ENCODE measurements at regions of chr3 and their contacts with region 1.

Region 1: GRCh38 chr3:50652709-50653108 is 22.0 kb upstream of the DOCK3 start:
- DNase-seq: peak; percentile 84
- H3K4me3 Mint-ChIP-seq: no peak overlapping the region
- H3K27ac Mint-ChIP-seq: no peak overlapping the region
- H3K4me1 Mint-ChIP-seq: peaks cover 22% of the 10 kb centered on the region
- H3K27me3 Mint-ChIP-seq: no peaks in the 10 kb centered on the region

Region 2: DNA sequence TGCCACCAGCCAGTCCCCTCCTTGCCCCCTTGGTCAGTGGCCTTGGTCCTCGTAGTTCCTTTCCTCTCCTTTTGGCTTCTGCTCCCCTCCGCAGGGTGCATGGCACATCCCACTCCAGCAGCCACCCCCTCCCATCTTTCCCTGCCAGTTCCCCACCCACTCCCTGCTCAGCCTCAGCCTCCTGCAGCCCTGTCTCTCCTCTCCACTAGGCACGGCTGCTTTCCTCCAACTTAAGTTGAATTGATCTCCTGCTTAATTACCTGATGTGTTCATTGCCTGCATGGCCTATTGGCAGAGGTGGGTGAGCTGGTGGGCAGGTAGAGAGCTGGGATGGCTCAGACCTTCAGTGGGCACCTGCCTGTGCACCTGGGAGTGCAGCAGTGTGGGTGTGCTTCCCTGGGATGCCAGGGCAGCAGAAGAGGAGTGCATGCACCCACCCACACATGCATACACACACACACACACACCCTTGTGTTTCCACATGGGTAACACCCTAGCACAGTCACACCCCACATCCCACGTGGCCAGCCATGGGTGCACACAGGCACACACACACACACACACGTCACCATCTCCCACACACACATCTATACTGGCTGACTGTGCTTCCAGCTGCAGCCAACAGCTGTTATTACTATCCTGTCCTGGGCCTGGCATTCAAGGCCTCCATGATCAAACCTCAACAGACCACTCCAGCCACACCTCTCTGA is 116.1 kb before region 1 on chr3:
- CTCF ChIA-PET with region 1: no interaction called
- intact Hi-C with region 1: no loop called
- DNase-seq: no peak
- H3K4me3 Mint-ChIP-seq: no peak overlapping the region
- H3K27ac Mint-ChIP-seq: no peak overlapping the region
- H3K4me1 Mint-ChIP-seq: no peaks in the 10 kb centered on the region
- H3K27me3 Mint-ChIP-seq: no peaks in the 10 kb centered on the region

Region 3: DNA sequence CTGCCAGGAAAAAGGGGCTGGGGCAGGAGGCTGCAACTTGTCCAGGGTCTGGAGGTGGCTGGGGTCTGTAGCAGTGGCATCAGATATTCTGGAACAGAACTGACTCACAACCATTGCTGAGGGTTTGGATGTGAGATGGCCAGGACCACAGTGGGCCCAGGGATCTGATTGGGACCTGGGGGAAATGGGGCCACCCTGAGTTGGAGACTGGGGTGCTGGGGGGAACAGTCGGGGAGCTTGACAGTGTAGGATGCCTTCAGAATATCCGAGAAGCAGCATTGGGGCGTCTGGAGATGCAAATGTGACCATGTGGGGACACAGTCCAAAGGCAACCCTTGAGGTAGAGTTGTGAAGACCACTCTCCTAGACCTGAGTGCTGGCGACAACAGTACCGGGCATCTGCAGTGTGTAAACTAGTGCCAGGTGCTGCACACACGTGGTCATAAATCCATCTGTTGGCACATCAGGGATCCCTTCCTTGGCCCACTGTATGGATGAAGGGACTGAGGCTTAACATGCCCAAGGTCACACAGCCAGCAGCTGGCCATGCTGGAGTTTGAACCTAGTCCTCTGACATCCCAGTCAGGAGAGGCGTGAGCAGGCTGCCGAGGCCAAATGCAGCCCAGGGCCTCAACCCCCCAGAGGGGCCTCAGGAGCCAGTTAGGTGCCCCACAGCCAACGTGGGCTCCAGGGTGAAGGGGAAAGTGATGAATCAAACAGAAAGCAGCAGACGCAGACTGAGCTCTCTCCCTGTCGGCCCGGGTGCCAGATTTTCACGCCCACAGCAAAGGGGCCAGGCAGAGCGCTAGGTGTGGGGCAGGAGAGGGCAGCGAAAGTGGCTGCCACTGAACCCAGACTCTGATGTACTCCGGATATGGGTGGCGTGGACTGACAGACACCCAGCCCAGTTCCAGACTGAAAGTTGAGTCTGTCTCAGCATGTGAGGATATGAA is 64.6 kb before region 1 on chr3:
- CTCF ChIA-PET with region 1: interaction called, 8 read pairs
- intact Hi-C with region 1: loop called (anchors 1 kb)
- DNase-seq: peak; percentile 94
- H3K4me3 Mint-ChIP-seq: peak overlapping the region; percentile 42
- H3K27ac Mint-ChIP-seq: peak overlapping the region; percentile 99
- H3K4me1 Mint-ChIP-seq: peaks cover 91% of the 10 kb centered on the region
- H3K27me3 Mint-ChIP-seq: no peaks in the 10 kb centered on the region

Region 4: GRCh38 chr3:50617096-50617791 is 35.5 kb before region 1 on chr3 and contains the start of gene MAPKAPK3:
- CTCF ChIA-PET with region 1: interaction called, 148 read pairs
- intact Hi-C with region 1: loop called (anchors 1 kb)
- DNase-seq: peak; percentile 48
- H3K4me3 Mint-ChIP-seq: peak within 1 kb of the TSS; percentile 77
- H3K27ac Mint-ChIP-seq: peak within 1 kb of the TSS; percentile 86
- H3K4me1 Mint-ChIP-seq: peaks cover 60% of the 10 kb centered on the region
- H3K27me3 Mint-ChIP-seq: no peaks in the 10 kb centered on the region
- total RNA-seq, gene MAPKAPK3: 105 to 106 TPM

Region 5: DNA sequence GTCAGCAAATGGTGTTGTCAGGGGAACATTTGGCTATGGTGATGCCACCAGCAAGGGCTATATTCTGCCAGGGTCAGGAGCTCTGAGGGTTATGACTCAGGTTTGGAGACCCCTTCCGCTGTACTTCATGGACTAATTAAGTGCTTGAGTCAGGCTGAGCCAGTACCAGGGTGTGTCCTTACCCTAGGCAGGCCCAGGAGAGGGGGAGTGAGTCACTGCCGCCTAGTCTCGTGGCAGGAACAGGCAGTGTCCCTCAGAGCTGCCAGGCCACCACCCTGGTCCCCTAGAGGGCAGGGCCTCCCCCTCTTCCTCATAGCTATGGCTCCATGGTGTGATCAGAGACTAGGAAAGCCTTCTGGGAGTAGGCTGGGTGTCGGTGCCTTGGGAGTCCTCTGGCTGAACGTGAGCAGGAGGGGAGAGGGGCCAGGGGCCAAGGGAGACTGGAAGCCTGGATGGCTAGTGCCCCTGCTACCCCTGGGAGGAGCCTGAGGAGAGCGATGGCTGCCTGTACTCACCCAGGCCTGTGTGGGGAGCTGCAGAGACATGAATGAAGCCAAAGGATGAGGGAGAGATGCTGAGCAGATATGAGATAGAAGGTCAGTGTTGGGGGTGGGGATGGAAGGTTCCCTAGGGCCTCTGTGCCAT is 25.2 kb before region 1 on chr3:
- CTCF ChIA-PET with region 1: interaction called, 69 read pairs
- intact Hi-C with region 1: loop called (anchors 1 kb)
- DNase-seq: peak; percentile 62
- H3K4me3 Mint-ChIP-seq: no peak overlapping the region
- H3K27ac Mint-ChIP-seq: peak overlapping the region; percentile 79
- H3K4me1 Mint-ChIP-seq: peaks cover 98% of the 10 kb centered on the region
- H3K27me3 Mint-ChIP-seq: no peaks in the 10 kb centered on the region

Region 6: DNA sequence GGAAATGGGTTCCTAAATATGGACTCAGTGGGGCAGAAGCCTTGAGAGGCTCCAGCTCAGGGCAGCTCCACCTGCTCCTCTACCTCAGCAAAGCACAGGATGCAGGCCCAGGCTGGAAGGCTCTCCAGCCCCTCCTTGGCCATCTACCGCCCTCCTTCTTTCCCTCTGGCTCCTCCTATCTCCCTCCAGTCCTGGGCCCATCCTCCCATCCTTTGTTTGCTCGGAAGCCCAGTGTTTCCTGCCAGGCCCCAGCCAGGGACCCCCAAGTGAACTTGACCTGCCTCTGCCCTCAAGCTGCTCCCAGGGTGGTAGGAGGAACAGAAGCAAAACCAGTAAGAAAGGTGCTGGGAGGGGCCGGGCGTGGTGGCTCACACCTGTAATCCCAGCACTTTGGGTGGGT is 15.7 kb before region 1 on chr3:
- CTCF ChIA-PET with region 1: interaction called, 26 read pairs
- intact Hi-C with region 1: no loop called
- DNase-seq: no peak
- H3K4me3 Mint-ChIP-seq: no peak overlapping the region
- H3K27ac Mint-ChIP-seq: no peak overlapping the region
- H3K4me1 Mint-ChIP-seq: peaks cover 56% of the 10 kb centered on the region
- H3K27me3 Mint-ChIP-seq: no peaks in the 10 kb centered on the region

Measured in activated naive CD4-positive, alpha-beta T cell treated with anti-CD3 and anti-CD28 coated beads for 36 hours (primary cell).